AG04450 (cell line): ENCODE measurements at regions of chr3 and their contacts with region 1.

Region 1: DNA sequence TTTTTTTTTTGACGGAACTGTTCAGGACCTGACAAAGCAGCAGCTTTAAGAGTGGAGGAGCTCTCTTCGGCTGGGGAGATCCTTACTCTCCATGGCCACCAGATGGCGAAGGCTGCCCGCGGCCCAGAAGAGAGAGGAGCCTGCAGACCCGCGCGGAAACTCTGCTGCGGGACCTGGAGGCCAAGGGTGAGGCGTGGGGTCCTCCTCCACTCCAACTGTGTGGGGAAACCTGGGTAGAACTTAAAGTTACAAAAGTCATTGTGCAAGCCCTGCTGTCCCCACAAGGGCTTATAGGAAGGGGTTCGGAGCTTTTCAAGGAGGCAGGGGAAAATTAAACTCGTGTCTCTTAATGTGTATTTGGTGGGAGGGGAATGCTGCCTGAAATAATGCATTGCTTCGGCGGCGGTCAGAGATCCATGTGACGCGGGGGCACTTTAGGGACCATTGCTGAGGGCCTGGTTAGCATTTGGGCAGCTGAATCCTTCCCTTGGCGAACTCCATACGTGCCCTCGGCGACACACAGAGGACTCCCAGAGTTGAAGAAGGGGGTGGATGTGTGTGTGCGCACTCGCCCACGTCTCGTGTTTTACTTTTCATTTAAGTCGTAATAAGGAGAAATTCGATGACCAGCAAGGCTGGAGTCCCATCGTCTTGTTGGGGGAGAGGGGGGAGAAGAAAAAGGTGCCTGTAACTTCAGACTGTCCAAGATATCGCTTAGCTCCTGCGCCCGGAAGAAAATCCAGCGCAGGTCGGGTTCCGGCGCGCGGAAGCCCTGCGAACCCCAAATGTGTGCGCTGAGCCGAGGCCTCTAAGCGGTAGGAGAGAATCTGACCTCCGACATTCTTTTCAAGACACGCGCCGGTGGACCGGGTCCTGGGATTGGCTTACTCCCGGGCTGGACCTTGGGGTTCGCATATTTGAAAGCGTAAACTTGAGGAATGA is 9.7 kb downstream of the EOMES start:
- DNase-seq: peak; percentile 37
- H3K4me3 ChIP-seq: peak overlapping the region; percentile 57
- H3K27ac ChIP-seq: no peak overlapping the region
- H3K27me3 ChIP-seq: peaks cover 72% of the 10 kb centered on the region
- CTCF ChIP-seq: peak; percentile 91

Region 2: DNA sequence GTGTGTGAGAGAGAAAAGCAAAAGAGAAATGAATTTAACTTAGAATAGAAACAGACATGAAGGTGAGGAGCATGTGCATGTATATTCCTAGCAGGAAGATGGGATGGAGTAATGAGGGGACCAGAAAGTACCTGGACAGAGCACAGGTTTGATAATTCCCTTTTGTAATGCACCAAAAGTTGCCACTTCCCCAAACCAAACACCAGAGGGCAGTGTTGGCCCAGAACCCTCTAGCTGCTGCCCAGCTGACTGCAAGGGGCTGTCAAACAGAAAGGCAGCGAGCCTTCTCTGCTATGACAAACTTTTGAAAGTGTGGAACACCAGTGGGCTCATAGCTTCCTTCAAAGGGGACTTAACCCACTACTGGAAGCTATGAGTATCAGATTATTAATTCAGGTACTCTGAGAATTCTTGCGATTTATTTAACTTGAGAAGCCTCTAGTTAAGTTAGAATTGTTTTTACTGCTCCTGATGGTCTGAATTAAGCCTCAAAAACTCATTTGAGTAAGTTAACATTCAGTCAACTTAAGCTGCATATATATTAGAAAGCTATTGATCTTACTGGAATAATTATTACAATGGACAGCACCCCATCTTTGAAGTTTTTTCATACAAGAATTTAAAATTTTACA is 578.1 kb before region 1 on chr3:
- CTCF ChIA-PET with region 1: interaction called, 10 read pairs
- POLR2A ChIA-PET with region 1: no interaction called
- DNase-seq: peak; percentile 42
- H3K4me3 ChIP-seq: no peak overlapping the region
- H3K27ac ChIP-seq: no peak overlapping the region
- H3K27me3 ChIP-seq: no peaks in the 10 kb centered on the region
- CTCF ChIP-seq: peak; percentile 93

Region 3: DNA sequence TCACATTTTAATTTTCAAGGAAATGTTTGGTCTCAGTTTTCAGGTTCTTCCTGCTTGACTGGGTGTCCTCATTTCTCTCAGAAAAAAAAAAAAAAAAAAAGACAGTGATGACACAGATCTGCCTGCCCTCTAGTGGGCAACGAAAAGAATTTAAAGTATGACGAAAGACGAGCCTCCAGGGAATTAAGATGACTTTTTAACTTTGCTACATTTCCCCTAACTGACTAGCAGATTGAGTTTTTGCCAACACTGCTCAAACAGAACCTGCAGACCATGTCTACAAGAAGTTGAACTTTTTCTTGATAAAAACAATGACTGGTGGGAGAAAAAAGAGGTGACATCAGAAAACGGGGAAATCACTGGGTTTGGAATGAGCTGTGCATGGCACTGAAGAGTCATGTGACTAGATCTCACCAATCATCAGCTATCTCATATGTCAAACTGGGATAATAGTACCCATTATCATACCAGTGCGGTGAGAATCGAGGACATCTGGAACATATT is 31.1 kb before region 1 on chr3:
- CTCF ChIA-PET with region 1: interaction called, 24 read pairs
- POLR2A ChIA-PET with region 1: interaction called, 7 read pairs
- DNase-seq: peak; percentile 59
- H3K4me3 ChIP-seq: no peak overlapping the region
- H3K27ac ChIP-seq: no peak overlapping the region
- H3K27me3 ChIP-seq: no peaks in the 10 kb centered on the region
- CTCF ChIP-seq: peak; percentile 67

Region 4: GRCh38 chr3:27728195-27729087 is 16.0 kb after region 1 on chr3:
- CTCF ChIA-PET with region 1: interaction called, 26 read pairs
- POLR2A ChIA-PET with region 1: no interaction called
- DNase-seq: no peak
- H3K4me3 ChIP-seq: no peak overlapping the region
- H3K27ac ChIP-seq: no peak overlapping the region
- H3K27me3 ChIP-seq: peaks cover 85% of the 10 kb centered on the region
- CTCF ChIP-seq: peak; percentile 21; the same call in 1 of the 2 replicates

Region 5: DNA sequence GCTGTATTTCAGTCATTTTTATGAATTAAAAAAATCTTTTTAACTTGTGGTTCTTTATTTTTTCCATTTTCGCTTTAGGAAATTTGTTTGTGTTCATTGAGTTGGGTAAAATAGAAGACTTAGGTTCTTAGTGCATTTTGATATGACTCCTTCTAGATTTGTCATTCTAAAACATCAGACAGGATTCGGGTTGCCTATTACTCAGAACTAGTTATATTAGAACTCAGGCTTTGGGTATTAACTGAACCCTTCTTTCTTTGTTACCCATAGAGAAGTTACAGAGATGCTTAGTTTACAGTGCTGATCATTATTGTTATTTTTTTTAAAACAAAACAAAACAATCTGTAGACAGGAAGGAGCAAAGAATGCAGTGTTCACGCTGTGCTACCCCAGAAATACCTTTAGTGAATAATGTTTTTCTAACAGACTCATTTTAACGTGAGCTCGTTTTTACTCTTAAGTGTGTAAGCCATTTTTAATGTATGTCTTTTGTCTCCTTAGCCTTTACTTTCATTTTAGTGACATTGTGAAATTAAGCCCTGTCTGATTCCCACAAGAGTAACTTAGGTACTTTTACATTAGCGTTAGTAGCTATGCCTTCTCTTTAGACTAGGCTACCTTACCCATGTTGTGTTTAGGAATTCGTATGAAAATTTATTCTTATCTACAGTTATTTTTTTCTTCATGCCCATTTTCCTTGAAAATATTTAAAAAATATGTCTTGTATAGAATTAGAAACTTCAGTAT is 582.4 kb after region 1 on chr3:
- CTCF ChIA-PET with region 1: interaction called, 17 read pairs
- POLR2A ChIA-PET with region 1: no interaction called
- DNase-seq: no peak
- H3K4me3 ChIP-seq: no peak overlapping the region
- H3K27ac ChIP-seq: no peak overlapping the region
- H3K27me3 ChIP-seq: no peaks in the 10 kb centered on the region
- CTCF ChIP-seq: no peak

Region 6: DNA sequence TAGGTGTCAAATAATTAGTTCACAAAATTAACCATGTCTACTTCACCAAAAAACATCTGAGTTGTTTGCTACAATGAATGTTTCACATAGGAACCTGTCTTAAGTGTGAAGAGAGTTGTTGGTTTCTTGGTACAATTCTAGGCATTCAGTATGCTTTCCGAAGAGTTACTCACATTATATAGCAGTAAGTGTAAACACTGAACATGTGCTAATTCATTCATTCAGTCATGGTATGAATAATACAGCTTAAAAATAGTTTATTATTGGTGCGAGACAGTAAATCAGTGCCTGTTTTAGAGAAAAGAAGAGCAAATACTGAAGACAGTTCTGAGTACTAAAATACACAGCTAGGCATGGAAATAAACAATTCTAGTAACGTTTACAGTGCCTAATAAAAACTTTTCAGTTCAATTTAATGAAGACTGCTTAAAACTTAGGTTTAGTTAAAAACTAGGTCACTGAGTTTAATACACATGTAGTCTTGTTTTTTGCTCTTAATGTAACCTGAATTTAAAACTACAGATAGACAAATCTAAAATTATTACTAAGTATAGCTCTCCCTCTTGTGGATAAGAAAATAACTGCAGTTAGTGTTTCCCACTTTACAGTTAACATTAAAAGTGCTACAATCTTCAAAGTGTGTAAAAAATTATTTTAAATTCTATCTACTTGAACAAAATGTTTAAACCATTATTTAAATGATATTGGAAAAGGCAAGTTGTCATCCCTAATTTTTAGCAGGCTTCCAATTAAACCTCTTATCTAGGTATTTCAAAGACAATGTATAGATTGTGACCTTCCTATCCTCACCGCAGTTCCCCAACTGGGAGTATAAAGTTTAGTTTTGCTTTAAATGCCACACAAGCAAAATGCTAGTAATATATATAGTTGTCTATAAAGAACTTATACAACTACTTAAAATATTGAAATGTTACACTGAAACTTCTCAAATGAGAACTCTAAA is 616.1 kb after region 1 on chr3:
- CTCF ChIA-PET with region 1: interaction called, 113 read pairs
- POLR2A ChIA-PET with region 1: no interaction called
- DNase-seq: no peak
- H3K4me3 ChIP-seq: no peak overlapping the region
- H3K27ac ChIP-seq: no peak overlapping the region
- H3K27me3 ChIP-seq: no peaks in the 10 kb centered on the region
- CTCF ChIP-seq: peak; percentile 57

Region 7: DNA sequence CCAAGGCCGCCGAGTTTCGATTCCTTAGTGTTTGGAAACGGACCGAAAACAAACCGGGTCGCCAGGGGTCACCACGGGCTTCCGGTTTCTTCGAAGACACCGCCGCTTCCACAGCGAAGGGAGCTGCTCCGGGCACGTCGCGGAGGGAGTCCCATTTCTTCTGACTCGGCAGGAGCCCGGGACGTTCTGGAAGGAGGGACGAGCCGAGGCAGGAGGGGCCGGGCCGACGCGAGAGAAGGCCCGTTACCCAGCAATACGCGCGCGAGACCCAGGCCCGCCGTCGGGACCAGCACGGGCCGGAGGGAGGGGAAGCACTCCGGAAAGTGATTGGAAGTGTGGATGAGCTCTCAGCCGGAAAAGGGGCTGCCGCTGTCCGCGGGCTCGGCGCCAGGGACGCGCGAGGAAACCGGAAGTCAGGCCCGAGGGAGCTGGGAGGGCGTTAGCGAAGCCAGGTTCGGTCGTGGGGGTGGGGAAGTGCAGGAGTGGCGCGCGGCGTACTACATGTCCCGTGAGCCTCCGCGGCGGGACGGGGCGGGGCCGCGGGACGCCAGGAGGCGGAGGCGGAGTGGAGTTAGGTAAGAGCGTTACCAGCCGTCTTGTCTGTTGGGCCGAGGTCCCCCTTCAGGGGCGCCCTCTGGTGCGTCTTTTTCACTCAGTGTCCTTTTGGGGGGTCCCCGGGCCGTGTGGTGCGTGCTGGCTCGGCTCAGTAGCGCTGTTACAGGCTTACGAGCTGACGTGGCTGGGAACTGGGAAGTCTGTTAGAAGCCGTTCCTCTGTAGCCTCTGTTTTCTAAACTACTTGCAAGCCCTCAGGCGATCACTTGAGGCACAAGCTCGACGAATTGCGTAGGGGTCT is 636.4 kb after region 1 on chr3 and contains the starts of genes AZI2 and ZCWPW2:
- CTCF ChIA-PET with region 1: interaction called, 12 read pairs
- POLR2A ChIA-PET with region 1: no interaction called
- DNase-seq: peak; percentile 90
- H3K4me3 ChIP-seq: peak within 1 kb of the TSS; percentile 84
- H3K27ac ChIP-seq: peak within 1 kb of the TSS; percentile 99
- H3K27me3 ChIP-seq: no peaks in the 10 kb centered on the region
- CTCF ChIP-seq: peak; percentile 36; the same call in 1 of the 2 replicates
- polyA plus RNA-seq, gene AZI2: 119 and 164 TPM in 2 replicates
- polyA plus RNA-seq, gene ZCWPW2: 0.65 and 0.76 TPM in 2 replicates